ENCODE measurements at regions of chr16 and their contacts with region 1.

Region 1: DNA sequence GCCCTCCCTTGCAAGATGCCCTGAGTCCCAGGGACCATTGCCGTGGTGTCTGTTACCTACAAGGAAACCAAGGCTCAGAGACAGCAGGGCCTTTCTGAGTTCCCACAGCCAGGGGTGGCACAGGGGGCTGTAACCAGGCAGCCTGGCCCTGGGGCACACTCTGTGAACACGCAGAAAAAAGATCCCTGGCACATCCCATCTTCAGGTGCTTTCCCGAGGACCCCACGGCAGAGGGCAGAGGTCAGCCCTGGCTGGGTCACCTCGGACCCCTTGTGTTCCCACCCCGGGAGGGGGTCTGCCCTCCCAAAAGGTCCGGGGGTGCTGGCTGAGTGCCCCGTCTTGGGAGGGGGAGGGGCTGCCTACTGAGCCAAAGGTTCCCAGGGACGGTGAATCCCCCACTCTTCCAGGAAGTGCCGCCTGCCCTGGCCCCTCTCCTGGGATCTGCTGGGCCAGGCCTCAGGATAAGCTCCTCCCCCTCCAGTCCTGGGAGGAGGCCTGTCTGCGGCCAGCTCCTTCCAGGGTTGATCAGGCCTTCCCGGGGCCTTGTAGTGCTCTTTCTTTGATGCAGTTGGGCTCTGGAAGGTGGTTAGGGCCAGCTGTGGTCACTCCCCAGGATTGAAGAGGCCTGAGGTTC is 8.1 kb downstream of the GLIS2 start:
- DNase-seq: no peak
- ATAC-seq: peak; percentile 62
- H3K4me3 ChIP-seq: peak overlapping the region; percentile 6 to 30; a peak in 3 of 4 replicates
- H3K27ac ChIP-seq: peak overlapping the region; percentile 92
- H3K4me1 ChIP-seq: peaks cover 95% of the 10 kb centered on the region
- H3K27me3 ChIP-seq: no peaks in the 10 kb centered on the region
- CTCF ChIP-seq: no peak

Region 2: GRCh38 chr16:4090351-4090851 is 233.6 kb before region 1 on chr16:
- CTCF ChIA-PET with region 1: no interaction called
- POLR2A ChIA-PET with region 1: no interaction called
- in situ Hi-C with region 1: no loop called
- intact Hi-C with region 1: no loop called
- DNase-seq: no peak
- ATAC-seq: 0 out of 2 replicates have a peak, but pooled peaks have one; percentile 28
- H3K4me3 ChIP-seq: no peak overlapping the region; a peak in 1 of 4 replicates
- H3K27ac ChIP-seq: peak overlapping the region; percentile 89
- H3K4me1 ChIP-seq: peaks cover 50% of the 10 kb centered on the region
- H3K27me3 ChIP-seq: no peaks in the 10 kb centered on the region
- CTCF ChIP-seq: no peak

Region 3: DNA sequence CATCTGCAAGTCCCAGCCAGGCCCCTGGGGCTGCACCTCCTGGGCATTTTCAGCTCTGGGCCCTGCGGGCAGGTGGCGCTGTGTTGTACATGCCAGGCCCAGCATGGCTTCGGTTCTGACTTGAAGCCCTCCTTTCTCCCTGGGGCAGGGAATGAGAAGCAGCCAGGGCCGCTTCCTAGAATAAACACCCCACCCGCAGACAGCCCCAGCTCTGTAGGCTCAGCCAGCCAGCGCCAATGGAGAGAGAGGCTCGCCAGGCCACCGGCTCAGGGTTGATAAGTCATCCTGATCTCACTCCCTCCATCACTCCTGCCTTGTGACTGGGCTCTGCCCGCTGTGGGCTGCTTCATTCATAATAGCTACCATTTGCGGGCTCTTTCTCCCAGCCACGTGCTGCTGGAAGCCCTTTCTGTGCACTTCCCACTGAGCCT is 14.1 kb before region 1 on chr16:
- CTCF ChIA-PET with region 1: interaction called, 12 read pairs
- POLR2A ChIA-PET with region 1: interaction called, 3 read pairs
- in situ Hi-C with region 1: no loop called
- intact Hi-C with region 1: no loop called
- DNase-seq: no peak
- ATAC-seq: peak; percentile 69
- H3K4me3 ChIP-seq: no peak overlapping the region
- H3K27ac ChIP-seq: peak overlapping the region; percentile 45
- H3K4me1 ChIP-seq: peaks cover 19% of the 10 kb centered on the region
- H3K27me3 ChIP-seq: no peaks in the 10 kb centered on the region
- CTCF ChIP-seq: peak; percentile 90

Measured in Panc1 (cell line).